A673 (cell line): ENCODE measurements at regions of chr12 and their contacts with region 1.

Region 1: DNA sequence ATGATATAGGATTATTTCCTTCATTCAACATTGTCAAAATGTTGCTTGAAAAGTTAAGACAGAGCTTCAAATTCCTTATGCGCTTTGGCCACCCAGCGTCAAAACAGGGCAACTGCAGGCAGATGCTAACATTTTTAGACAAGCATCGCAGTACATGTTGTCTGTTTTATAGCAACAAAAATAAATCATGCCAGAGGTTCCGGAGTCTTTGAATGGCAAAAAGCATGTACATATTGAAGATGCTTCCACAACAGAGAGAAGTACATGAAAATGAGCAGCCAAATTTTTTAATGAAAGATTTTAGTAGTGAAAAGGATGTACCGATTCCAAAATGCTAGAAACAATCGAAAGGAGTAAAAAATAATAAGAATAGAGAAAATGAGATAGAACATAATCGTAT is 49.8 kb upstream of the USP15 start:
- DNase-seq: peak; percentile 64
- H3K4me3 ChIP-seq: no peak overlapping the region
- H3K27ac ChIP-seq: no peak overlapping the region
- H3K4me1 ChIP-seq: no peaks in the 10 kb centered on the region
- H3K27me3 ChIP-seq: no peaks in the 10 kb centered on the region
- CTCF ChIP-seq: peak; percentile 89

Region 2: GRCh38 chr12:62799126-62799736 is 588.8 kb after region 1 on chr12:
- CTCF ChIA-PET with region 1: no interaction called
- POLR2A ChIA-PET with region 1: no interaction called
- intact Hi-C with region 1: loop called (anchors 5 kb)
- DNase-seq: peak; percentile 88
- H3K4me3 ChIP-seq: no peak overlapping the region
- H3K27ac ChIP-seq: no peak overlapping the region
- H3K4me1 ChIP-seq: no peaks in the 10 kb centered on the region
- H3K27me3 ChIP-seq: no peaks in the 10 kb centered on the region
- CTCF ChIP-seq: peak; percentile 87